ENCODE measurements at regions of chr1 and their contacts with region 1.

Region 1: GRCh38 chr1:244272471-244273261 is 179.0 kb downstream of the ADSS2 start:
- DNase-seq: peak in 5 of 6 donors; percentile 38 to 79 (median 56)
- ATAC-seq: peak; percentile 91 to 99 (median 98)
- H3K4me3 ChIP-seq: no peak overlapping the region
- H3K27ac ChIP-seq: peak overlapping the region in 1 of 4 donors; percentile 25
- H3K4me1 ChIP-seq: no peaks in the 10 kb centered on the region
- H3K27me3 ChIP-seq: no peaks in the 10 kb centered on the region
- CTCF ChIP-seq: peak; percentile 71 to 89 (median 75)

Region 2: GRCh38 chr1:243708210-243708609 is 564.5 kb before region 1 on chr1:
- intact Hi-C with region 1: loop called in 1 of 3 experiments (anchors 10 kb)
- DNase-seq: no peak
- ATAC-seq: no peak
- H3K4me3 ChIP-seq: no peak overlapping the region
- H3K27ac ChIP-seq: no peak overlapping the region
- H3K4me1 ChIP-seq: peaks cover 0 to 7% (median 0%) of the 10 kb centered on the region in 3 donors
- H3K27me3 ChIP-seq: no peaks in the 10 kb centered on the region
- CTCF ChIP-seq: no peak

Measured in pancreas (tissue), 10 donors.